ENCODE measurements at regions of chr2 and their contacts with region 1.

Region 1: GRCh38 chr2:200811336-200812121 is at the start of gene BZW1:
- DNase-seq: peak; percentile 97 to 98 (median 98)
- H3K4me3 ChIP-seq: peak within 1 kb of the TSS; percentile 78
- H3K27ac ChIP-seq: peak within 1 kb of the TSS; percentile 74 to 95
- H3K4me1 ChIP-seq: peaks cover 2% of the 10 kb centered on the region
- H3K27me3 ChIP-seq: no peaks in the 10 kb centered on the region
- CTCF ChIP-seq: peak in 1 of 3 donors; percentile 13
- EP300 ChIP-seq: no peak
- POLR2A ChIP-seq: peak; percentile 96
- total RNA-seq, gene BZW1: 104 to 278 (median 156) TPM

Region 2: GRCh38 chr2:200396781-200397242 is 414.7 kb before region 1 on chr2:
- intact Hi-C with region 1: no loop called
- DNase-seq: no peak
- H3K4me3 ChIP-seq: no peak overlapping the region
- H3K27ac ChIP-seq: no peak overlapping the region
- H3K4me1 ChIP-seq: no peaks in the 10 kb centered on the region
- H3K27me3 ChIP-seq: no peaks in the 10 kb centered on the region
- CTCF ChIP-seq: no peak
- EP300 ChIP-seq: no peak
- POLR2A ChIP-seq: no peak

Region 3: DNA sequence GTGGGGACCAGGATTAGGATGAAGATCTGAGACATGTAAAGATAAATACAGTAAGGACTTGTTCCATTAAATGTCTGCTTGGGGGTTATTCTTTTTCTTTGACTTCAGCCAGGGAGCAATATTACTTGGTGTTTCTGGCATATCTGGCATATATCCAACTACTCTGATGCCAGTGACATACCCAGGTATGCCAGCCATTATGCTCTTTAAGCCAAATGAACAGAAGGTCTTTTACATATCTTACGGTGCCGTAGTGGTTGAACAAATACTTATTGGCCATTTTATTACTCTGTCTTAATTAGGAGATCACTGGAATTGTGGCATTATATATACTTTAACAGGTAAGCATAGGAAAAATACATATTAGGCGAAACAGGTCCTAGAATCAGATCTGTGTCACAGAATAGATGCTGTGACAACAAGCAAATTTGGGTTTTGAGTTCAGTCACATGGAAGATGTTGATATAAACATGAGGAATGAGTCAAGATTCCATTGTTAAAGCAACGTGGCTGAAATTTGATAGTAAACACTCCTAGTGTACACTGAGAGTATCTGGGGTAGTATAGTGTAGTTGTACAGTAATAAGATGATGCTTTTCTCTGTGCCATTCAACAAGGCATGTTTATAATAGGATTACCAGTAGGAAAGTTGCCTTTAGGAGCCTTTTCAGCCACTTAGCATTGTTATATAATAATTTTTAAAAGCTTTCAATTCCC is 364.2 kb before region 1 on chr2:
- intact Hi-C with region 1: no loop called
- DNase-seq: no peak
- H3K4me3 ChIP-seq: no peak overlapping the region
- H3K27ac ChIP-seq: no peak overlapping the region
- H3K4me1 ChIP-seq: peaks cover under 1% of the 10 kb centered on the region
- H3K27me3 ChIP-seq: no peaks in the 10 kb centered on the region
- CTCF ChIP-seq: no peak
- EP300 ChIP-seq: no peak
- POLR2A ChIP-seq: no peak

Region 4: GRCh38 chr2:200864176-200864976 is 52.8 kb after region 1 on chr2 and contains the start of gene CLK1:
- intact Hi-C with region 1: loop called (anchors 2 to 10 kb)
- DNase-seq: peak; percentile 97 to 98 (median 98)
- H3K4me3 ChIP-seq: peak within 1 kb of the TSS; percentile 100
- H3K27ac ChIP-seq: peak within 1 kb of the TSS; percentile 99
- H3K4me1 ChIP-seq: peaks cover 11% of the 10 kb centered on the region
- H3K27me3 ChIP-seq: no peaks in the 10 kb centered on the region
- CTCF ChIP-seq: peak in 2 of 3 donors; percentile 4 to 27
- EP300 ChIP-seq: peak; percentile 50
- POLR2A ChIP-seq: peak; percentile 100
- total RNA-seq, gene CLK1: 88.3 to 266 (median 131) TPM

Measured in ovary (tissue), 10 donors.